Mammary epithelial cell (primary cell): ENCODE measurements at regions of chr3 and their contacts with region 1.

Region 1: GRCh38 chr3:20637729-20638128 is 451.7 kb upstream of the SGO1 start:
- DNase-seq: no peak
- H3K4me3 ChIP-seq: no peak overlapping the region
- H3K27ac ChIP-seq: no peak overlapping the region
- H3K4me1 ChIP-seq: no peaks in the 10 kb centered on the region
- H3K27me3 ChIP-seq: no peaks in the 10 kb centered on the region
- CTCF ChIP-seq: no peak

Region 2: DNA sequence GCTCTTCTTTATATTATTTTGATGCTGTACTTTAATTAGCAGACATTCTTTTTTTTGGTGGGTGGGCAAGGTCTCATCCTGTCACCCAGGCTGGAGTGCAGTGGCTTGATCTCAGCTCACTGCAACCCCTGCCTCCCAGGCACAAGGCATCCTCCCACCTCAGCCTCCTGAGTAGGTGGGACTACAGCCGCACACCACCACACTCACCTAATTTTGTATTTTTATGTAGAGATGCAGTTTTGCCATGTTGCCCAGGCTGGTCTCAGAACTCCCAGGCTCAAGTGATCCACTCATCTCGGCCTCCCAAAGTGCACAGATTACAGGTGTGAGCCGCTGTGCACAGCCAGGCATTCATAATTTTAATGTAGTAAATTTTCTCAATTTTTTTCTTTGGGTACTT is 505.2 kb after region 1 on chr3:
- CTCF ChIA-PET with region 1: interaction called, 10 read pairs
- dilution Hi-C with region 1: no loop called
- in situ Hi-C with region 1: no loop called
- intact Hi-C with region 1: no loop called
- DNase-seq: no peak
- H3K4me3 ChIP-seq: no peak overlapping the region
- H3K27ac ChIP-seq: no peak overlapping the region
- H3K4me1 ChIP-seq: no peaks in the 10 kb centered on the region
- H3K27me3 ChIP-seq: no peaks in the 10 kb centered on the region
- CTCF ChIP-seq: no peak